BJ (cell line): ENCODE measurements at regions of chr3 and their contacts with region 1.

Region 1: DNA sequence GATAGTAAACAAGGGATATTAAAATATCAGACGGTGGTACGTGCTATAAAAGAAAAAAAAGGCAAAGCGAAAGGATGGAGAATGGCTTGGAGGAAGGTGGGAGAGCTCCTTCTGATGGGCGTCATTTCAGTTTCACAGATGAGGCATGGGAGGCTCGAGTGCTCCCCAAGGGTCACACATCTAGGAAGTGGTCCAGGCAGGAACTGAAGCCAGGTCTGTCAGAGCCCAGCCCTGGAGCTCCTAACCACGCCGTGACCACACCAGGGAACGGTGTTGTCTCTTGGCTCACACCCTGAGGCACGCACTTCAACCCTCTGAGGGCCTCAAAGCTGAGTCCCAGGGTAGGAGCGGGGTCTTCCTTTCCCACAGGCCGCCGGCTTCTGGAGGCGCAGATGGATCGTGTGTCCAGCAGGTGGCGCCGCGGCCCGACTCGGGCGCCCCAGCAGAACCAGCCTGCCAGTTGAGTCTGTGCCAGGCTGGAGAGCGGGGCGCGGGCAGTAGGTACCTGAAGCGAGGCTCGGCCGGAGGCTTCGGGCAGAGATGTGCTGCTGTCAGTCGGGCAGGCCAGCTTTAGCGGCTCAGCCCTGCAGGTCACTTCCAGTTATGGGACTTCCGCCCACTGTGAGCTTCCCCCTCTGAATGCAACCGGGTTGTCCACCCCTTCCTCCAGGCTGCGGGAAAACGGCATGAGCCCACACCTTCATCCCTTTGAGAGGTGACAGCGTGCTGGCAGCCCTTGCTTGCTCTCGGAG is 68.1 kb downstream of the SLC6A1 start:
- DNase-seq: no peak
- H3K4me3 ChIP-seq: no peak overlapping the region
- H3K27me3 ChIP-seq: peaks cover 3% of the 10 kb centered on the region; the same call in 1 of the 2 replicates
- CTCF ChIP-seq: peak; percentile 93

Region 2: DNA sequence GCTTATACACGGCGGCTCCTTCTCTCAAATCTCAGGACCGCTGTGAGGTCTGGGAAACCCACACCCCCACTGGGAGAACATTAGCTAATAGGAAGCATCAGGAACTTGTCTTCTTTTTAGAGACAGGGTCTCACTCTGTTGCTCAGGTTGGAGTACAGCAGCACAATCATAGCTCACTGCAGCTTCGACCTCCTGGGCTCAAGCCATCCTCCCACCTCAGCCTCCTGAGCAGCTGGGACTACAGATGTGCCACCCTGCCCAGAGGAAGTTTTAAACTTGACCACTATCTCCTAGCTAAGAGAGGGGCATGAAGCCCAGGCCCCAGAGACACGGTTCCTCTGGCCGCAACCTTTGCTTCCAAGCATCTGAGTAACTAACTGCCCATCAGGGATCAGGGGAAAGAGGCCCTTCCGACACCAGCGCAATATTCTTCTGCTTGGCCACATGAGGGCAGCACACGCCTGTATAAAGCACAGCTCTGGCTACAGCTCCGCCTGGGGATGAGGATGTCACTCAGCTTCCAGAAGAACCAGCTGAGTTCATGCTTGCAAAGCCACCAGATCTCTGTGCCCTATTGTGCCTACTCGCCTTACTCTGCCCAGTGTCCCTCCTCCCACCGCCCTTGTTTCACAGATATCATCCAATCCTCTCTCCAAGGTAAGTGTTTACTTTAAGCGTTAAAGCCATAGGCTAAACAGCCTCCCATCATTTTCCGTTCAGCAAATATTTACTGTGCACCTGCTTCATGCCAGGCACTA is 302.2 kb before region 1 on chr3:
- CTCF ChIA-PET with region 1: interaction called, 84 read pairs
- POLR2A ChIA-PET with region 1: no interaction called
- DNase-seq: no peak
- H3K4me3 ChIP-seq: no peak overlapping the region
- H3K27me3 ChIP-seq: no peaks in the 10 kb centered on the region
- CTCF ChIP-seq: peak; percentile 80

Region 3: DNA sequence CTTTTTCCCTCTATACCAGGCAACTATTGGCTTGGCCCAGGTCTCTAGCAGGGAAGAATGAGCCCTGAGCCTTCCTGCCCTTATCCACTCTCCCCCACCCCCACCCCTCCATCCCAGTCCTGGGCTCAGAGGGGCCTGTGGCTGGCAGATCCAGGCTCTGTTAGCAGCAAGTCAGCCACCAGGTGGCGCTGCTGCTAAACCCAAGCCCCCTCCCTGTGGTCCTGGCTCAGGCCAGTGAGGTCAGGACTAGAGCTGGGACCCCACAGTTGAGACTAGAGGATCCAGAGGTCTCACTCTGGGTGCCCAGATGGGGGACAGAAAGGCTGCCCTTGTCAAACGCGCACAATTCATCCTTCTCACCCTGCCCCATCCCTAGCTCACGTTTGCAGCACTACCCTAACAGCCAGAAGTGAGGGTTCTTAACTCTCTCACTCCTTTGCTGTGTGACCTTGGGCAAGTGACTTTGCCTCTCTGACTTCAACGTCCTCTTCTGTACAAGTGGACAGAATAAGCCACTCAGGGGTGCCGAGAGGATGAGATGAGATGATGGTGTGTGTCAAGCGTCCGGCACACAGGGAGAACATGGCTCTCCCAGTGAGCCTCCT is 114.9 kb before region 1 on chr3:
- CTCF ChIA-PET with region 1: interaction called, 72 read pairs
- POLR2A ChIA-PET with region 1: no interaction called
- DNase-seq: no peak
- H3K4me3 ChIP-seq: no peak overlapping the region
- H3K27me3 ChIP-seq: no peaks in the 10 kb centered on the region; the same call in none of the 2 replicates
- CTCF ChIP-seq: peak; percentile 79

Region 4: DNA sequence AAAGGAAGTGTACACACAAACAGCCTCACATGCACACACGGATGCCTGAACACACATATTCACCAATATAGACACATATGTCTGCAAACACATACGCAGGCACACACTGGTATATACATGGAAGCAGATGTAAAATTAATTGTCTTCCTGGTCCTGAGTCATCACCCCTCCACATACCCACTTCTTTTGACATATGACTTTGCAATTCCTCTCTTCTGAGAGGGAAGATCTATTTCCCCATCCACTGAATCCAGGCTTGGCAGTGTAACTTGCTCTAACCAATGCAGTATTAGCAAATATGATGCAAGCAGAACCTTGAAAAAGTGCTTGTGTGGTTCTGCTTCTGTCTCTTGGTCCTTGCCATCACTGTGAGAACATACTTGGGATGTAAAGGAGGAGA is 16.8 kb after region 1 on chr3:
- CTCF ChIA-PET with region 1: interaction called, 83 read pairs
- POLR2A ChIA-PET with region 1: no interaction called
- DNase-seq: no peak
- H3K4me3 ChIP-seq: no peak overlapping the region
- H3K27me3 ChIP-seq: no peaks in the 10 kb centered on the region; the same call in 1 of the 2 replicates
- CTCF ChIP-seq: no peak

Region 5: DNA sequence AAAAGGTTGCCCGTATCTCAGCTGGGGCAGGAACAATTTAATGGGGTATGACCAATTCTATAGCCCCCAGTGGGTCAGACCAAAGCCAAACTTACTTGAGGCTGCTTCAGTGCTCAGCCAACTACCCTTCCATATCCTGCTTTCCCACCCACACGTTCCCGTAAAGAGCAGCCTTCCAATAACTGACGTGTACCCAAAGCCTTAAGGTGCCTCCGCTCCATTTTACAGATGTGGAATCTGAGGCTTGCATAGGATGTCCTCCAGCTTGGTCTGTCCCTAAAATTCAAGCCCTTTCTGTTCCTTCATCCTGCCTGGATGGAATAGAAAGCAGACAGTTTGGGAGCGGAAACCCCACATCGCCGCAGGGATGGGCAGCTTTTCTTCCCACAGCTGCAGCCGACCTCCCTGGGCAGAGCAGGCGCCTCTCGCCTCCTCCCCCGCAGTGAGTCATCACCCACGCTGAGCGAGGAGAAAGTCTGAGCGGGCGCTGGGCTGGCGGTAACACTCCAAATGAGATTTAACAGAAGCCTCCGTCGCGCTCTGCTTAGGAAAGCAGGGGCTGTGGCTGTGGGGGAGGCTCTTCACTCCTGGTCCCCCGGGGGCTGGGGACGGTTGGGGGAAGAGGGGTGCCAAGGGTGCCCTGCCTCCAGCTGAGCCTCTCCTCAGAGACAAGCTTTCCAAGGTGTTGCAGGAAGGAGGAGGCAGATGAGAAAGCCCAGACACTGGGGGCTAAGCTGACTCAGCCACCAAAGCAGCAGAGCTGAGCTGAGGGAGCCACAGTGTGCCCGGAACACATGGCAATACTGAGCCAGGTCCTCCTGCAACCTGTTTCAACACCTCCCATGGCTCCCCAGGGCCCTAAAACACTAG is 35.8 kb after region 1 on chr3:
- CTCF ChIA-PET with region 1: interaction called, 19 read pairs
- POLR2A ChIA-PET with region 1: no interaction called
- DNase-seq: peak; percentile 58
- H3K4me3 ChIP-seq: peak overlapping the region; percentile 38
- H3K27me3 ChIP-seq: no peaks in the 10 kb centered on the region
- CTCF ChIP-seq: no peak

Region 6: GRCh38 chr3:11201246-11202024 is 140.8 kb after region 1 on chr3:
- CTCF ChIA-PET with region 1: interaction called, 21 read pairs
- POLR2A ChIA-PET with region 1: no interaction called
- DNase-seq: no peak
- H3K4me3 ChIP-seq: no peak overlapping the region
- H3K27me3 ChIP-seq: no peaks in the 10 kb centered on the region
- CTCF ChIP-seq: no peak

Region 7: GRCh38 chr3:11335056-11335608 is 274.5 kb after region 1 on chr3:
- CTCF ChIA-PET with region 1: interaction called, 110 read pairs
- POLR2A ChIA-PET with region 1: no interaction called
- DNase-seq: no peak
- H3K4me3 ChIP-seq: no peak overlapping the region
- H3K27me3 ChIP-seq: no peaks in the 10 kb centered on the region
- CTCF ChIP-seq: peak; percentile 66